Left ventricle myocardium inferior (tissue), 1 donor: ENCODE measurements at regions of chr7 and their contacts with region 1.

Region 1: GRCh38 chr7:100691676-100692577 is 2.1 kb downstream of the GIGYF1 start:
- DNase-seq: peak; percentile 72
- H3K4me3 ChIP-seq: peak overlapping the region; percentile 97
- H3K27ac ChIP-seq: peak overlapping the region; percentile 88
- H3K4me1 ChIP-seq: peaks cover 69% of the 10 kb centered on the region
- H3K27me3 ChIP-seq: no peaks in the 10 kb centered on the region
- CTCF ChIP-seq: peak; percentile 91

Region 2: DNA sequence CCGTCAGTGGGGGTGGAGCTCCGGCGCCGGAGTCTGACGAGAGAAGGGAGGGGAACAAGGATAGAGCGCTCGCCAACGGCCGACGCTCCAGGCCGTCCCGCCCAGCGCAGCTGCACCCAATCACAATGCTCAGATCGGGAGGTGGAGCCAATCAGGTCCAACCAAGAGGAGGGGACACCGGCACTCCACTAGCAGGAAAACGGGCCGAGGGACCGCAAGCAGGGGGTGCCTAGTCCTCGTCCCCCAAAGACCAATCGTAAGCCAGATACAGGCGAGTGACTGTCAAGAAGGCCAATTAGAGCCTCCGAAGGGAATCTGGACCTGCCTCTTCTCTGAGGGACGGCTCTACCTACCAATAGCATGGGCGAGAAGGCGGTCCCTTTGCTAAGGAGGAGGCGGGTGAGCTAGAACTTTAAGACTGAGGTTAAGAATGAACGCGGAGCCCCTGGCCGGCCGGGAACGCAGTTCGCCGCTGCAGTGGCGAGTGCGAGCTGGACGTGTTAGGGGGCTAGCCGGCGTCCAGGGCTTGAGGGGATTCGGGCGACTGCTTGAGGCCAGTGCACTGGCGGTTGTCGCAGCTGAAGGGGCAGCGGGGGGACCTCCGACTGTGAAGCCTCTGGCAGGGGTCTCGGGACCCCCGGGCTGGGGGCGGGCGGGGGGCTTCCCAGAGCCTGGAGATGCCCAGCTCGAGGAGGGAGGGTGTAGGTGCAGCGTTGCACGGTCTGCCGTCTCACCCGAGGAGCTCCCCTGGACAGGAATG is 105.5 kb before region 1 on chr7 and contains the start of gene FBXO24:
- intact Hi-C with region 1: loop called (anchors 10 kb)
- DNase-seq: peak; percentile 100
- H3K4me3 ChIP-seq: peak within 1 kb of the TSS; percentile 100
- H3K27ac ChIP-seq: peak within 1 kb of the TSS; percentile 98
- H3K4me1 ChIP-seq: peaks cover 65% of the 10 kb centered on the region
- H3K27me3 ChIP-seq: no peaks in the 10 kb centered on the region
- CTCF ChIP-seq: no peak
- total RNA-seq, gene FBXO24: 0.25 TPM

Region 3: GRCh38 chr7:100852048-100852872 is 160.3 kb after region 1 on chr7 and contains the start of gene SLC12A9:
- intact Hi-C with region 1: no loop called
- DNase-seq: peak; percentile 92
- H3K4me3 ChIP-seq: peak within 1 kb of the TSS; percentile 81
- H3K27ac ChIP-seq: peak within 1 kb of the TSS; percentile 83
- H3K4me1 ChIP-seq: peaks cover 18% of the 10 kb centered on the region
- H3K27me3 ChIP-seq: no peaks in the 10 kb centered on the region
- CTCF ChIP-seq: peak; percentile 96
- total RNA-seq, gene SLC12A9: 10.9 TPM